ENCODE measurements at regions of chr5 and their contacts with region 1.

Region 1: GRCh38 chr5:147391781-147392180 is 118.1 kb downstream of the DPYSL3 start:
- DNase-seq: no peak
- CTCF ChIP-seq: no peak

Region 2: GRCh38 chr5:147098233-147098790 is 293.5 kb before region 1 on chr5:
- CTCF ChIA-PET with region 1: interaction called, 14 read pairs
- POLR2A ChIA-PET with region 1: no interaction called
- DNase-seq: peak; percentile 24
- CTCF ChIP-seq: peak; percentile 19

Region 3: DNA sequence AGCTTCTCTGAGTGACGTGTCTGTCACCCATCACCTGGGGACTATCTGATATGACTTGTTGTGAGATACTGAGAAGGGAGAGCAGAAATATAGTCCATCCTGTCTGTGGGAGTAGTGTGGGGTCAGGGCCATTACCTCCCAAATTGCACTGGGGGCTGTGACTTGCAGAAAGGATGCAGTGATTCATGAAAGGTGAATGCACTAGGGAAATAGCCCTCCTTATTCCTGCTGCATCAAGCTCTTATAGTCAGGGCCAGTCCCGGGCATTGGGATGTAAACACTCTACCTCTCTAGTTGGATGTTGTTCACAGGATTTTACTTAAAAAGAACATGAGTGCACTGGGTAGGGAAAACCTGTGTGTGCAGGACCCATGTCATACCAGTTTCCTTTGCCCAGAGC is 32.2 kb before region 1 on chr5:
- CTCF ChIA-PET with region 1: no interaction called
- POLR2A ChIA-PET with region 1: no interaction called
- DNase-seq: no peak
- CTCF ChIP-seq: no peak

Region 4: GRCh38 chr5:147417135-147417813 is 25.5 kb after region 1 on chr5:
- CTCF ChIA-PET with region 1: no interaction called
- POLR2A ChIA-PET with region 1: no interaction called
- DNase-seq: no peak
- CTCF ChIP-seq: no peak

Region 5: DNA sequence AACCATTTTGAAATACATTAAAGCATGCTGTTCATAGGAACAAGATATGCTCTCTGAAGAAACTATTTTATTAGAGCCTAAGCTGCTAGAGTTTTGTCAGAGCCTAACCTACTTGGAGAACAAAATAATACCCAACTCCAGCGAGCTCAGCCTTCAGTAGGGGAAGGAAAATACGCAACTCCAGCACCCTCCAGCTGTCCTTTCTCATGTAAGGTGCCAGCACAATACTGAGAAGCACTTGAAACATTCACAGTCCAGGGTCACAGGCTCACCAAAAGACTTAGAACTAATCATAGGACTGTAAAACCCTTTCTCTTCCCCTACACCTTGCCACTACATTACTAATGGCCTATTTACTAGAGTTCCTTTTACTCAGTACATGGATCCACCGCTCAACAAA is 99.2 kb after region 1 on chr5:
- CTCF ChIA-PET with region 1: no interaction called
- POLR2A ChIA-PET with region 1: no interaction called
- DNase-seq: no peak
- CTCF ChIP-seq: no peak

Region 6: DNA sequence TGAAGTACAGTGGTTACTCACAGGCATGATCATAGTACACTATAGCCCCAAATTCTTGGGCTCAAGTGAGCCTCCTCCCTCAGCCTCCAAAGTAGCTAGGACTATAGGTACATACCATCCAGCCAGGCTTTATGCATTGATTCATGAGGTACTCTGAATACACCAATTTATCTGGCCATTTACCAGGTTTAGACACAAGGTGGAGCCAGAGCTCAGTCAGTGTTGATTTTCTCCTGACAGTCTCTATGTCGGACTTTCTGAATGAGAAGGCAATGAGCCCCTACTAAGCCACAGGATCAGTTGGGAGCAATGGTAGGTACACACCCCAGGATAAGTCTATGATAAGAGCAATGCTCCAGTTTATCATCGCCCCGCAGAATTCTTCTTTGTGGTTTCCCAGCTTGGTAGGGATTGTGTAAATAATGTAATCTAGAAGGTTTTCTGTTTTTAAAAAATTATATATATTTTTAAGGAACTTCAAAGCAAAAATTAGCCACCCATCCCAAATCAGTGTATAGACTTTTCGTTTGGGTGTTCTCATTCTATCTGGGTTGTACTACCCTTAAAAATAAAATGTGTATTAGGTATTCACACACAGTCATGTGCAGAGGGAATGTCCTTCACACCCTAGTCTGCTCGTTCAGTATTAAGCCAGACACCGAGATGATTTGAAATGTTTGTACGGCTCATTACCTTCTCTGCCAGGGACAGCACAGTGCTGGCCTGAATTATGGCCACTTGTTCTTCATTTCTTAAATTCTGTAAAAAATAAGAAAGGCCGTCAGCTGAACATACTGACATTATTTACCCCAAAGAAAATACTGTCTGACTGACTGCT is 236.5 kb after region 1 on chr5:
- CTCF ChIA-PET with region 1: no interaction called
- POLR2A ChIA-PET with region 1: no interaction called
- DNase-seq: peak; percentile 39
- CTCF ChIP-seq: peak; percentile 68

Measured in GM10248 (cell line).